Natural killer cell (primary cell): ENCODE measurements at regions of chr1 and their contacts with region 1.

Region 1: GRCh38 chr1:224356685-224357625 is at the start of gene CNIH4:
- DNase-seq: peak; percentile 78 to 96
- ATAC-seq: peak; percentile 97 to 99 (median 98)
- H3K4me3 ChIP-seq: peak within 1 kb of the TSS; percentile 61
- H3K4me3 Mint-ChIP-seq: peak within 1 kb of the TSS; percentile 95
- H3K27ac ChIP-seq: peak within 1 kb of the TSS; percentile 51
- H3K27ac Mint-ChIP-seq: peak within 1 kb of the TSS; percentile 85 to 94
- H3K4me1 ChIP-seq: peaks cover 14% of the 10 kb centered on the region
- H3K4me1 Mint-ChIP-seq: peaks cover 39% of the 10 kb centered on the region in 2 donors
- H3K27me3 ChIP-seq: no peaks in the 10 kb centered on the region
- H3K27me3 Mint-ChIP-seq: no peaks in the 10 kb centered on the region
- CTCF ChIP-seq: no peak
- total RNA-seq, gene CNIH4: 20.4 to 32.4 (median 27.3) TPM

Region 2: GRCh38 chr1:224253721-224254120 is 103.2 kb before region 1 on chr1:
- intact Hi-C with region 1: no loop called
- DNase-seq: no peak
- ATAC-seq: no peak
- H3K4me3 ChIP-seq: no peak overlapping the region
- H3K4me3 Mint-ChIP-seq: no peak overlapping the region
- H3K27ac ChIP-seq: no peak overlapping the region
- H3K27ac Mint-ChIP-seq: no peak overlapping the region
- H3K4me1 ChIP-seq: no peaks in the 10 kb centered on the region
- H3K4me1 Mint-ChIP-seq: no peaks in the 10 kb centered on the region
- H3K27me3 ChIP-seq: no peaks in the 10 kb centered on the region
- H3K27me3 Mint-ChIP-seq: no peaks in the 10 kb centered on the region
- CTCF ChIP-seq: no peak

Region 3: DNA sequence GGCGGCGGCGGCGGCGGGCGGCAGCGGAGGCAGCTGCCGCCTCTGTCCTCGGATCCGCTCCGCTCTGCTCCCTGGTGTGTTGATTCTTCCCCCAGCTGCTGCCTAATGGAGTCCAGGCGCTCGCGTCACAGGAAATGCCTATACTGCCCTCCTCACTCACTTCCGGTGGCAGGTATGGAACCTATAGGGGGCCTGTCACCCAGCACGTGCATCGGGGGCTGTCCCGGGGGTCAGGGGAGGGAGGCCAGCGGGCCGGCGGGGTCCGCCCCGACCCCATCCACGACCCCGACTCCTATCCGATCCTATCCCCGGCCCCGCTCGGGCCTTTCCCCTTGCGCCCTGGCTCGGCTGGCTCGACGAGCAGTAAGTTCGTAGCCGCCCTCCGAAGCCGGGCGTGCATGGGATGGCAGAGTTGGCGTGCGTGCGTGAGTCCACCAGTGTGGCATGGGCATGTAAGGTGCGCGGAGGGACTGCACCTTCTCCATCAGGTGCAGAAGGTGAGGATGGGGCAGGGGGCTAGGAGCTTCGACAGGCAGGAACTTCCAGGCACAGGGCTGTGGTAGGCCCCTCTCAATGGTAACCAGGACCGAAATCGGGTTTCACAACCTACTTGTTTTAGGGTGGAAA is 77.8 kb after region 1 on chr1 and contains the start of gene WDR26:
- intact Hi-C with region 1: loop called (anchors 1 kb)
- DNase-seq: peak; percentile 76 to 93
- ATAC-seq: peak; percentile 72 to 86 (median 81)
- H3K4me3 ChIP-seq: peak within 1 kb of the TSS; percentile 86
- H3K4me3 Mint-ChIP-seq: peak within 1 kb of the TSS; percentile 90
- H3K27ac ChIP-seq: peak within 1 kb of the TSS; percentile 94
- H3K27ac Mint-ChIP-seq: peak within 1 kb of the TSS; percentile 86 to 88
- H3K4me1 ChIP-seq: peaks cover 17% of the 10 kb centered on the region
- H3K4me1 Mint-ChIP-seq: peaks cover 46 to 49% of the 10 kb centered on the region in 2 donors
- H3K27me3 ChIP-seq: no peaks in the 10 kb centered on the region
- H3K27me3 Mint-ChIP-seq: no peaks in the 10 kb centered on the region
- CTCF ChIP-seq: peak; percentile 27
- total RNA-seq, gene WDR26: 244 to 310 (median 261) TPM

Region 4: DNA sequence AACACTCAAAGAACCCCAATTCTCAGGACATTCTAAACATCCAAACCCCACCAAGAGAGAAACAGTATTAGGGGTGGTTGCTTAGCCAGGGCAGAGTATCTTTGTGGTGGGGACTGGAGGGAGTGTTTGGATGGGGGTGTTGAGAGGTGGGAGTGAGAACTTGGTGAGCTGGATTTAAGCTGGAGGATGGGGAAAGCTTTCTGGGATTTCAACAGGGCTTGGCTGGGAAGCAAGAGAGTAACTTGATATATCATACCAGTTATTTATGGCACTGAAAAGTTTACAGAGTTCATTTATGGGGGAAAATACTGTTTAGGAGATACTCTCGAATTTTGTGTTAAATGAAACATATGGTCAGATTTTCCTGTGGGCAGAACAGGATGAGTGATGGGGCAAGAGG is 252.4 kb after region 1 on chr1:
- intact Hi-C with region 1: no loop called
- DNase-seq: no peak
- ATAC-seq: no peak
- H3K4me3 ChIP-seq: no peak overlapping the region
- H3K4me3 Mint-ChIP-seq: no peak overlapping the region
- H3K27ac ChIP-seq: no peak overlapping the region
- H3K27ac Mint-ChIP-seq: no peak overlapping the region
- H3K4me1 ChIP-seq: no peaks in the 10 kb centered on the region
- H3K4me1 Mint-ChIP-seq: no peaks in the 10 kb centered on the region
- H3K27me3 ChIP-seq: no peaks in the 10 kb centered on the region
- H3K27me3 Mint-ChIP-seq: peaks cover 18 to 50% of the 10 kb centered on the region in 2 donors
- CTCF ChIP-seq: no peak

Region 5: DNA sequence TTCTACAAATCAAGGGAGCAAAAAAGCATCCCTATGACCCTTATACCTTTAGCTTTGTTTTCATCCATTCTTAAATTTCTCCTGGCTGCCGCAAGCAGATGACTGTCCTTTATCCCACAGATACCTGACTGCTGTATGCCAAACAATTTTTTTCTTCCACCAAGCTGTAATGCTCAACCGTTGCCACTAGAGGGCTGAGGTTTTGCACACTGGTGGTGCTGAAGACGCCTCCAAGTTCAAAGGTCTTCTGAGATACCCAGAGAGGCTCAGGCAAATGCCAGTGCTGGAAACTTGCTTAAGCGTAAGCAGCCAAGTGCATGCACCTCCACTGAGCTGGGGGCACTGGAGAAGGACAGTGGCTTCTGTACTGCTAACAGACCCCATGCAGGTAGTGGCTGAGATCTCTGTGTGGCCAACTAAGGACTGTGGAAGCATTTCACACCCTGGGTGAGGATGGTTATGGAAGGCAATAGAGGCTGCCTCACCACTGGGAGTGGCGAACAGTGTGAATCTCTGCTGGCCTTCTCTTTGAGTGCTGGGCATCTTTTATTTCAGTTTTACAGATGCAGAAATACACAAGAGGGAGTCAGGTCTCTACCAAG is 287.7 kb after region 1 on chr1:
- intact Hi-C with region 1: no loop called
- DNase-seq: peak; percentile 29 to 81
- ATAC-seq: peak; percentile 65 to 89 (median 83)
- H3K4me3 ChIP-seq: no peak overlapping the region
- H3K4me3 Mint-ChIP-seq: no peak overlapping the region
- H3K27ac ChIP-seq: no peak overlapping the region
- H3K27ac Mint-ChIP-seq: no peak overlapping the region
- H3K4me1 ChIP-seq: no peaks in the 10 kb centered on the region
- H3K4me1 Mint-ChIP-seq: peaks cover 0 to 4% of the 10 kb centered on the region in 2 donors
- H3K27me3 ChIP-seq: no peaks in the 10 kb centered on the region
- H3K27me3 Mint-ChIP-seq: peaks cover 4 to 6% of the 10 kb centered on the region in 2 donors
- CTCF ChIP-seq: peak; percentile 94